ENCODE measurements at regions of chr4 and their contacts with region 1.

Region 1: GRCh38 chr4:139142980-139143379 is 34.0 kb downstream of the ELF2 start:
- DNase-seq: no peak
- ATAC-seq: no peak
- H3K4me3 ChIP-seq: no peak overlapping the region
- H3K27ac ChIP-seq: no peak overlapping the region
- H3K4me1 ChIP-seq: peaks cover 21 to 57% (median 43%) of the 10 kb centered on the region in 9 donors
- H3K27me3 ChIP-seq: no peaks in the 10 kb centered on the region
- CTCF ChIP-seq: no peak

Region 2: GRCh38 chr4:138901177-138901576 is 241.8 kb before region 1 on chr4:
- intact Hi-C with region 1: no loop called
- DNase-seq: no peak
- ATAC-seq: peak in 1 of 8 donors; percentile 33
- H3K4me3 ChIP-seq: no peak overlapping the region
- H3K27ac ChIP-seq: no peak overlapping the region
- H3K4me1 ChIP-seq: peaks cover 0 to 8% (median 3%) of the 10 kb centered on the region in 9 donors
- H3K27me3 ChIP-seq: no peaks in the 10 kb centered on the region
- CTCF ChIP-seq: no peak

Region 3: DNA sequence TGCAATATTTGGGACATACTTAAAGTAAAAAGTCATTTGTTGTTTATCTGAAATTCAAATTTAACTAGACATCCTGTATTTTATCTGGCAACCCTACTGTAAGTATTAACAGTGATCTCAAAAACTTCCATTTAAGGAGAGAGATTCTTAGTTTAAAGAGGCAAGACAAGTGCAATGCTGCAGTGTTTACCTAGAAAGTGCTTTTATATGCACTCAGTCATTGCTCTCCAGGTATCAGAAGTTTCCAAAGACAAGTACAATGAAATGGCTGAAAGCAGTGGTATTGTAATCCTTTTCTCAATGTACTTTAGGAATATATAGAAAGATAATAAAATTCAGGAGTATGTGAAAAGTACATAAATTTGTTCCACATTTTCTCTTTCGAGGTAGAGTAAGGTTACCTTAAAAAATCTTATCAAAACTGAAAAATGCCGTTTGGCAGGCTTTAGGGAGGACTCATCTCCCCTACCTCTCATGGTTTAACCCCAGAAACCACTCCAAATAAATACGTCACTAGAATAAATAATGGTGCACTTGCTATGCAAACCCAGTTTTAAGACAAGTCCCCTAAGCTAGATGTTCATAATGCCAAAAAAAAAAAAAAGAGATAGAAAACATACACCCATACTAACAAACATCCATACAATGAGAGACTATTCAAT is 11.6 kb before region 1 on chr4:
- intact Hi-C with region 1: loop called in 1 of 10 experiments (anchors 1 kb)
- DNase-seq: no peak
- ATAC-seq: no peak
- H3K4me3 ChIP-seq: no peak overlapping the region
- H3K27ac ChIP-seq: no peak overlapping the region
- H3K4me1 ChIP-seq: no peaks in the 10 kb centered on the region
- H3K27me3 ChIP-seq: no peaks in the 10 kb centered on the region
- CTCF ChIP-seq: no peak

Measured in heart right ventricle (tissue), 16 donors.